HepG2 (cell line): ENCODE measurements at regions of chr16 and their contacts with region 1.

Region 1: DNA sequence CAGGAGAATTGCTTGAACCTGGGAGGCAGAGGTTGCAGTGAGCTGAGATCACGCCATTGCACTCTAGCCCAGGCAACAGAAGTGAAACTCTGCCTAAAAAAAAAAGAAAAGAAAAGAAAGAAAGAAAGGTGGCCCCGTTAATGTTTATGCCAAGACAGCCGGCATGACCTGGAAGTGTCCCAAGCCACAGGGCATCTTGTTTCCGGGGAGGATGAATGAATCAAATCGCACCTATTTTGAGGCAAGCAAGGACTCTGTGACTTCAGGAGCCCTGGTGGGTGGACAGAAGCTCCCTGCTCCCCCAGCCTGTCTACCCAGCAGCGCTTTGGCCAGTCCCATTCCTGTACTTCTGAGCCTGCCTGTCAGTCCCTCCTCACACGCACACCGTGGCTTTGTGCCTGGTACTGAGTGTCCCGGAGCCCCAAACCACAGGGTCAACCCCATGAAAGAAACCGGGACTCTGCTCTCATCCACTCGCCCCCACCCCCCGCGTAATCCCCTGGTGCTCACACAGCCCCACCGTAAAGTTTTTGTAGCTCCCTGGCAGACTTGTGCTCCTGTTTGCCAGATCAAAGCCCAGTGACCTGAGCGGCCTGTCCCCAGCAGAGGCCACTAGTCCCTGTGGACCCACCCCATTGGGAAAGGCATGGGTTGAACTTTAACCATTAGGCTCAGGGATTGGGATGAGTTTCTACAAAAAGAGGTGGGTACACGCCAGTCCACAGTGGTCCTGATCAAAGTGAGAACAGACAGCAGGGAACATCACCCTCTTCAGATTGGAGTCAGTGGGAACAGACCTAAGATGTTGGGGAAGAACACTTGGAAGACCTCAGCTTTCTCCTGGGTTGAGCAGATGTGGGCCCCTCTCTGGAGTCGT is 19.3 kb downstream of the CD2BP2 start:
- DNase-seq: peak; percentile 96
- ATAC-seq: peak; percentile 80
- H3K4me3 ChIP-seq: peak overlapping the region; percentile 68 to 95 (median 94)
- H3K27ac ChIP-seq: peak overlapping the region; percentile 99
- H3K4me1 ChIP-seq: peaks cover 51% of the 10 kb centered on the region
- H3K27me3 ChIP-seq: no peaks in the 10 kb centered on the region
- CTCF ChIP-seq: peak; percentile 56
- EP300 ChIP-seq: peak; percentile 71 to 73; a peak in 3 of 4 replicates
- POLR2A ChIP-seq: peak; percentile 76 to 84
- RAD21 ChIP-seq: no peak

Region 2: GRCh38 chr16:30395155-30395991 is 59.5 kb after region 1 on chr16 and contains the start of gene ZNF48:
- CTCF ChIA-PET with region 1: no interaction called
- POLR2A ChIA-PET with region 1: interaction called, 14 read pairs
- in situ Hi-C with region 1: no loop called
- intact Hi-C with region 1: no loop called
- DNase-seq: peak; percentile 89
- ATAC-seq: peak; percentile 94
- H3K4me3 ChIP-seq: peak within 1 kb of the TSS; percentile 75 to 93 (median 75)
- H3K27ac ChIP-seq: peak within 1 kb of the TSS; percentile 73
- H3K4me1 ChIP-seq: peaks cover 36% of the 10 kb centered on the region
- H3K27me3 ChIP-seq: no peaks in the 10 kb centered on the region
- CTCF ChIP-seq: peak; percentile 78
- EP300 ChIP-seq: 0 out of 4 replicates have a peak, but pooled peaks of 1 of the 2 experiments have one; percentile 19
- POLR2A ChIP-seq: peak in 1 of 2 experiments; percentile 70; a peak in 3 of 4 replicates
- RAD21 ChIP-seq: peak; percentile 92
- total RNA-seq, gene ZNF48: 10.9 and 12.3 TPM in 2 replicates

Region 3: DNA sequence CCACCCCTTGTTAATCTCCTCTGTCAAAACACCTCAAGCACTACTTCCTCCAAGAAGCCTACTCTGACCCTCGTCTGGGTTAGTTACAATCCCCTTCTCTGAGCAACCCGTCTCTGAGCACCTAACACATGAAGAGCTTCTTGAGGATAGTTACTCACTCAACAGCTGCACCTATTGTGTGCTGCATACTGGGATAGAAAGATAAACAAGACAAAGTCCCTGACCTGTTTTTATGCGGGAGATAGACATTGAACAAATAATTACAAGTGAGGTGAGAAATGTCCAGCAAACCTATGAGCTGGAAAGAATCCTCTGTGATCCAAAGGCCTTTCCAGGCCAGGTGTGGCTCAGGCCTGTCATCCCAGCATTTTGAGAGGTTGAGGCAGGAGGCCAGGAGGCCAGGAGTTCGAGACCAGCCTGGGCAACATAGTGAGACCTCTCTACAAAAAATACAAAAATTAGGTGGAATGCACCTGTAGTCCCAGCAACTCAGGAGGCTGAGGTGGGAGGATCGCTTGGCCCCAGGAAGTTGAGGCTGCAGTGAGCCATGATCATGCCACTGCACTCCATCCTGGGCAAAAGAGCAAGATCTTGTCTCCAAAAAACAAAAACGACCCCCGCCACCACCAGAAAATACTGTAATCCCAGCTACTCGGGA is 66.1 kb after region 1 on chr16:
- CTCF ChIA-PET with region 1: no interaction called
- POLR2A ChIA-PET with region 1: interaction called, 20 read pairs
- in situ Hi-C with region 1: no loop called
- intact Hi-C with region 1: no loop called
- DNase-seq: peak; percentile 97
- ATAC-seq: peak; percentile 77
- H3K4me3 ChIP-seq: peak overlapping the region in 1 of 3 experiments; percentile 3; a peak in 2 of 6 replicates
- H3K27ac ChIP-seq: peak overlapping the region; percentile 87
- H3K4me1 ChIP-seq: peaks cover 46% of the 10 kb centered on the region
- H3K27me3 ChIP-seq: no peaks in the 10 kb centered on the region
- CTCF ChIP-seq: no peak
- EP300 ChIP-seq: peak; percentile 33 to 77; a peak in 2 of 4 replicates
- POLR2A ChIP-seq: peak; percentile 40 to 71; a peak in 3 of 4 replicates
- RAD21 ChIP-seq: peak; percentile 54; the same call in 1 of the 2 replicates